ENCODE measurements at regions of chr1 and their contacts with region 1.

Region 1: GRCh38 chr1:226547754-226548191 is 791 bp upstream of the STUM start:
- DNase-seq: peak; percentile 87

Region 2: DNA sequence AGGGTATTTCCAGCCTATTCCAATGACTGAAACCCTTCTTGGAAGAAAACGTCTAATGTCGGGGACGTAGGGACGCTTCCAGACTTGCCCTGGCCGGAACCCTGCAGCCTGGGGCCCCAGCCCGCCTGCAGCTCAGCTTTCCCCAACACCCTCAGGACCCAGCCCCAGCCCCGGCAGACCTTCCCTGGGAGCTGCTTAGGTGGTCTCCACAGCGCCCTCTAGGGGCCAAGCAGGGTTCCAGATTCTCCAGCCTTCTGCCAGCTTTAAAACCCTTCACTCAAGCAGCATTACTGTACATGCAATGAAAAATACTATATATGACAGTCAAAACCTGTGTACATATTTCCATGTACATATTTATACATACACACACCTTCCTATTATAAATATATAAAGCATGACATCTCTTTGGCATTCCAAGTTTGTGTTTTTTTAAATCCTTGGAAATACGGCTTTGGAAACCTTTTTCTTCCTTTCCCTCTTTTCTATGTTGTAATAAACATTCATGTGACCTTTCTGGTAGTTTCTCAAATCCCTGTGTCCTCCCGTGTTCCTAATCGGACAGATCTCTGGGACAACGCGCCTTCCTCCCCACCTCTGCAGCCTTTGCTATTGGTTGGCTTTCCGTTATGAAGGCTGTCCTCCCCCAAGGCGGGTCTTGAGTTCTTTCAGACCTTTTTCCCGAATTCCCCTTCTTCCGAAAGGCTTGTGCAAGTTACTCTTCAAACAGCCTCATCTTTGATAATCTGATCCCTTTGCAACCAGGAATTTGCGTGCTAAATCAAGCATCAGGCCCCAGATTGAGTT is 61.1 kb after region 1 on chr1:
- intact Hi-C with region 1: loop called (anchors 2 kb)
- DNase-seq: peak; percentile 81

Region 3: GRCh38 chr1:226827968-226828513 is 280.3 kb after region 1 on chr1:
- intact Hi-C with region 1: loop called (anchors 5 kb)
- DNase-seq: peak; percentile 97